ENCODE measurements at regions of chrX and their contacts with region 1.

Region 1: DNA sequence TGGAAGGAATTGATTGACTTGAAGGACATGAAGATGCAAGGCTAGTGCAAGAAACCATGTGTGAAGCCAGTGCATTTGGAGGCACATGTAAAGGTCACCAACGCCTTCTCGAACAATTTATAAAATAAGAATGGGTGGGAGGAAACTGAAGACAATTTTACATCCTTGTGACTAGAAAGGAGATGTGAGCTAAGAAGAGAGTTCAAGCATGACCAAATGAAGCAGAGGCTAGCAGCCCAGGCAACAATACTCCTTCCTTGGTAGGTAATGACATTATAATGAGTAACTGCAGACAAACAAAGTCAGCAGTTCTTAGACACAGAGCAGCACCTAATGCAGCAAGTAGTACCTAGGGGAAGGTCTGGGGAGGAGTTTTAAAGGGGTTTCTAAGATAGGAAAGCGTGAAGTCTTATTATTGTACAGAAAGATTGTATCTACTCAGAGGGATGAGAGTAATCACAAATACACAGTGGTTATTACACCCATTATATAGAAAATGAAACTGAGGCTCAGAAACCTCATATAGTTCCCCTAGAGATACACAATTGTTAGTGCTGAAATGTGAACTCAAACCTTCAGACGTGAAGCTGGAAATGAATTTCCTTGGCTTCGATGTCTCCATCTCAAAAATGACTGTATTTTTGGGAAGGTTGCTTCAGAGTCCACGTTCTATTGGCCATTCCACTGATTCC is 56.1 kb downstream of the ATXN3L start:
- DNase-seq: peak; percentile 19
- CTCF ChIP-seq: no peak

Region 2: DNA sequence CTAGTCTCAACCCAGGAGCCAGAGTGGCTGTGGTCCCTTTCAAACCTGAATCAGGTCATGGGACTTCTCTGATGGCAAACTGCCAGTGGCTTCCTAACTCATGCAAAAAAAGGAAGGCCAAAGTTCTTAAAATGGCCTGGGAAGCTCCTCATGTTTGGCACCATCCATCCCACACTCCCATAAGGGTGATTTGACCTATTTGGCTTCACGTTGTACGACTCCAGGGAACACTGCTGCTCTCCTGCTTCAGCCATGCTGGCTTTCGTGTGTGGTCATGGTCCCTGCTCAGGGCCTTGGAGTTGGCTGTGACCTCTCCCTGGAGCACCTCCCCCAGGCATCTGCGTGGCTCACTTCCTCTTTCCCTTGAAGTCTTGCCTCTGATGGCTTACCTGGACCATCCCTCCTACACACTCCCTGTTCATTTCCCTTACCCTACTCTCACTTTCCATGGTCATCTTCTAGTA is 301.6 kb before region 1 on chrX:
- in situ Hi-C with region 1: no loop called
- DNase-seq: no peak
- CTCF ChIP-seq: no peak

Region 3: DNA sequence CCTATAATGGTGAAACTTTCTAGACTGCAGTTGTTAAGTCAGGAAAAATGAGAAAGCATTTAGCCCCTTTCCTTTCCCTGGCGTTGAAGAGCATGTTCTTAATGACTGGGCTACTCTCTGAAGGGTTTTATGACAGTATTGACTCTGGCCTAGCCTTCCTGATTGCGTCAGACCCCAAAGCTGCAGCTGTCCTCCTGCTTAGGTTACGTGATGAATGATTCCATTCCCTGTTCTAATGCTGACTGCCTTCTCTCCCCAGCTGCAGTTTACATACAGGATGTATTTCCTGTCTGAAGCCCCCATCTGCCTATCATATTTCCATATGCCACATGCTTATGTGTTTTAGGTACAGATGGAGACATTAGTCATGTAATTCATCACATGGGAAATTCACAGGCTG is 199.9 kb after region 1 on chrX:
- in situ Hi-C with region 1: loop called (anchors 10 kb)
- DNase-seq: no peak
- CTCF ChIP-seq: no peak

Measured in GM13976 (cell line).